Left cardiac atrium (tissue), 4 donors: ENCODE measurements at regions of chr1 and their contacts with region 1.

Region 1: DNA sequence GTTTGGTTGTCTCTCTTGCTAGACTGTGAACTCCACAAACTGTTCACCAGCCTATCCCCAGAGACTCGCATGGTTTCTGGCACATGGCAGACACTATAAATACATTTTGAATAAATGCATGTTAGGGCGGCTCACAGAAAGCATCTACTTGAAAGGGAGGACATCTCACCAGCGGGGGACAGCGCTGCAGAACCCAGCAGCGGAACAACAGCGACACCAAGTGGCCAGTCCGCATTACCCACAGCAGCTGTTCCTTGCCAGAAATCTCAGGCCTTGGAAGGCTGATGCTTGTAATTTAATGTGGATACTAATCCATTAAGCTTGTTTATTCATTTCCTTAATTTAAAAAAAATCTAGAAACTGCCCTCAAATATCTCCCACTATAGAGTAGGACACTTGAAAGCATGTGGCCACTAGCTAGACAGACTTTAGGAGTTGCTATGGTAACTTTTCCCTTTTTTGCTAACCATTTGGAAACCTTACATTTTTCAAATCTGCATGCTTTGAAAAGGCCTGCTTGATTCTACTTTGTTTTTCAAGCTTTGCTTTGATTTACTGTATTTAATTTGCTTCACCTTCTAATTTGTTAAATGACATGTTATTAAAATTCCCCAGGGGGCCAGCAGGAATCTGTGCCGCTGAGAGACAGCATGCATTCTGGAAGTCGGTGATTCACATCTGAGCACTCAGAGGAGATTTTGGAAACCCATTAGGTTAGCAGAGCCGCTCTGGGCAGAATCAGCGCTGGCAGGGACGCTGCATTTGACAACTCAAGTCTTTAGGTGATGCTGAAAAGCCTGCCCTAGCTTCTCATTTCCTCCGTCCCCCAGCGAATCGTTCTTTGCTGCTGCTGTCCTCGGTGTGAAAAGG is 63.5 kb upstream of the SSX2IP start:
- DNase-seq: peak; percentile 69
- ATAC-seq: peak; percentile 88 to 90

Region 2: DNA sequence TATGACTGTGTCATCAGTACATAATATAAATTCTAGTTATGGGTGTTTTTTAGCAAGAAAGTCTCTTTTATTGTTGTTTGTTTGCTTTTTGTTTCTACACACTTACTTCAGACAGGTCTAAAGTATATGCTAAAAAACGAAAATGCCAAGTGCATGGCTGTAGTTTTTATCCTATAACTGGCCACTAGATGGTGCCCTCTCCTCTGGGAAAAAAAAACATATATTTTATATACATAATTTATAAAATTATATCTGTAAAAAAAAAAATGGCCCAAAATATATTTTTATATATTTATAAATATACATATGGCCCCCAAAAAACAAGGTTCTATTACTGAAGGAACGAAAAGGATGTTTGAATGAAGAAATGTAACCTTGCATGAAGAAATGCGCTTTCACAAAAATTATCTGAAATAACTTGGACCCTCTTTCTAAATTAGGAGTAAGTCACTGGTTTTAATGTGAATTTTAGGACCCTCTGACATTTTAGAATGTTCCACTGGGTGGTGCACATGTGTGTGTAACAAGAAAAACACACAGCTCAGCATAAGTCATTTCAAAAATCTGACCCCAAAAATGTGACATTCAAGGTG is 848.3 kb before region 1 on chr1:
- intact Hi-C with region 1: loop called in 1 of 2 experiments (anchors 10 kb)
- DNase-seq: no peak
- ATAC-seq: no peak

Region 3: DNA sequence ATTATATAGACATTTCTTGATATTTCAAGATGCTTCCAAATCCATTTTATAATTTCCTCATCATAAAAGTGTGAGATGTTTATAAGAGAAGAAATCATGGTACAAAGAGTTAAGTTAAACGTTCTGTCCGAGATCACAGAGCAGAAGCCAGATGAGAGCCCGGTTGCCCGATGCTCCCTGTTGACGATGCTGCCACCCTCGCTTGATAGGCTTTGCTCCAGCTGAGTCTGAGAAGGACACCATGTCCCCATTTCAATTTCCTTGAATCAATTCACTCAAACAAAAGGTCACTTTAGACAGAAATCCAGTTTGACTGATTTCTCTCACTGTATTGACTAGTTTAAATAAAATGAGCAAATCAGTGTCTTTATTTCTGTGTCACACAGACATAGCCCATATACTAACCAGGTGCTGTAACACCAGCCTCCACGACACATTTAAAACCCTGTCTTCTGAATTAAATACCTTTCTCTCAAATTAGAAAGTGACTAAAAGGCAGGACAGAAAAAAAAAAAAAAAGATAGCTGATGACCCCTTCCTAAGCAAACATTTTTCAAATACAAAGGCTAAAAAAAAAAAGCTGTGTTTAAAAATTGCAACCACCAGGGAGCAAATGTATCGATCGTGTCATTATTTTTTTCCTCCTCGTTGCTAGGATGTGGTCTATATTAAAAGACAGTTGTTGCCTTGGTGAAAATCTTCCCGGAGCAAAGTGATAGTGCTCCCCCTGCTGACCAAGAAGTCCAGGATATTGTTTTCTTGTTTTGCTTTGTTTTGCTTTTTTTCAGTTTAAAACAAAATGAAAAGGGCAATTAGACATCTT is 320.3 kb before region 1 on chr1:
- intact Hi-C with region 1: loop called in 1 of 2 experiments (anchors 5 kb)
- DNase-seq: peak; percentile 31
- ATAC-seq: peak; percentile 75 to 82

Region 4: GRCh38 chr1:84619383-84620102 is 134.2 kb before region 1 on chr1:
- intact Hi-C with region 1: loop called in 1 of 2 experiments (anchors 10 kb)
- DNase-seq: no peak
- ATAC-seq: peak in 1 of 2 donors; percentile 34

Region 5: GRCh38 chr1:84644472-84644871 is 109.3 kb before region 1 on chr1:
- intact Hi-C with region 1: no loop called
- DNase-seq: no peak
- ATAC-seq: no peak

Region 6: GRCh38 chr1:84668185-84668584 is 85.6 kb before region 1 on chr1:
- intact Hi-C with region 1: loop called in 1 of 2 experiments (anchors 10 kb)
- DNase-seq: no peak
- ATAC-seq: peak in 1 of 2 donors; percentile 57